Mammary epithelial cell (primary cell): ENCODE measurements at regions of chr15 and their contacts with region 1.

Region 1: DNA sequence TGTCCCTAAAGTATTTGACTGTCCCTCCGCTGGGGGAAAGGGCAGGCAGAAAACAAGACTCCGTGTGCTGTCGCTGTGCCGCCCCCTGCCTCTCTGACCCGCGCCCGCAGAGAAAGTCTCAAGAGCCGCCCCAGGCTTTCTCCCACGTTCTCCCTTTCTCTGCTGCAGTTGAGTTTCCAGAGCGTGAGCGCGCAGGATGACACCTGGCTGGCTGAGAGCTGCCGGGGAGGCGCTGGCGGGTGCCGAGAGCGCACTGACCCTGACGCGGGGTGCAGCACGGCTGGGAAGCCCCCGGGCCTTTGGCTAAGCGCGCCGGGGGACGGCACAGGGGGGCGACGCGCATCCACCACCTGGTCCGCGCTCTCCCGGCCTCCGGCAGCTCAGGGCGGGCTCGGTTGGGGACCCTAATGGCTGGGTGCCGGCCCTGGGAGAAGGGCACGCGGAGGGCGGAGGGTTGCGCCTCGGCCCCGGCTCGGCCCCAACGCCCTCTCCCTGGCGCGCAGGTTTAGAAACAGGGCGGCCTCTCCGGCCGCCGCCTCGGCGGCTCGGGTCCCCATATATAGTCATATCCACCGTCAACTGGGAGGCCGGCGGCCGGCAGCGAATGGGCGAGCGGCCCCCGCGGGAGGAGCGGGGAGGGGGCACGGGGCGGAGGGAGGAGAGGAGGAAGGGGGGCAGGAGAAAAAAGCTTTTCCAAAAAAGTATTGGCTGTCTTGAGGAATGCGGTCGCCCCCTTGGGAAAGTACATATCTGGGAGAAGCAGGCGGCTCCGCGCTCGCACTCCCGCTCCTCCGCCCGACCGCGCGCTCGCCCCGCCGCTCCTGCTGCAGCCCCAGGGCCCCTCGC is at the start of gene TPM1:
- DNase-seq: peak; percentile 92
- H3K4me3 ChIP-seq: peak within 1 kb of the TSS; percentile 70 to 88 (median 83)
- H3K27ac ChIP-seq: peak within 1 kb of the TSS; percentile 81
- H3K4me1 ChIP-seq: peaks cover 74% of the 10 kb centered on the region
- H3K27me3 ChIP-seq: no peaks in the 10 kb centered on the region
- CTCF ChIP-seq: no peak
- total RNA-seq, gene TPM1: 463 to 1,538 TPM

Region 2: DNA sequence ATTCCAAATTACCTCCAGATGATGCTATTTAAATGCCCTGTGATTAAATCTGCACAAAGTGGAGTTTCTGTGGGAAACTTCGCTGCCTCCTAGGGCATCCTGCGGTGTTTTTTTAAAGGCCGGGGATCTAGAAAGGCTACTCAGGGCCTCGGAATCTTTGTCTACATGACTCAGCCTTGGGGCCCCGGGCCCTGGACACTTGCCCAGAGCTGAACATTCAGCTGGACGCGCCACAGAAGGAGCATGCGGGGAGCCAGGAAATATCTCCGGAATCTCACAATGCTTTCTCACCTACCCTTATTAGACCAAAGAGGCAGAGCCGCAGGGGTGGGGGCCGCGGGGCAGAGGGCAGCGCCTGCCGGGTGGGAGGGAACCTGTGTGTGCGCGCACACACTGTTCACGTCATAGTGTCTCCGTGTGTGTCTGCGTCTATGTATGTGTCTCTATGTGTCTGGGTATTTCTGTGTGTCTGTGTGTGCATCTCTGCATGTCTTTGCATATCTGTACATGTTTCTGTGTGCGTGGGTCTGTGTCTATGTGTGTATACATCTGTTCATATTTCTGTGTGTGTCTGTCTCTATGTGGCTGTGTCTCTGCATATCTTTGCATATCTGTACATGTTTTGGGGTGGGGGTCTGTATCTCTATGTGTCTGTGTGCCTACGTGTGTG is 145.1 kb before region 1 on chr15:
- CTCF ChIA-PET with region 1: interaction called, 3 read pairs
- dilution Hi-C with region 1: loop called (anchors 5 kb)
- in situ Hi-C with region 1: no loop called
- intact Hi-C with region 1: loop called (anchors 1 kb)
- DNase-seq: peak; percentile 98
- H3K4me3 ChIP-seq: peak overlapping the region in 1 of 3 experiments; percentile 25
- H3K27ac ChIP-seq: peak overlapping the region; percentile 100
- H3K4me1 ChIP-seq: peaks cover 79% of the 10 kb centered on the region
- H3K27me3 ChIP-seq: no peaks in the 10 kb centered on the region
- CTCF ChIP-seq: no peak

Region 3: GRCh38 chr15:62940755-62941361 is 101.3 kb before region 1 on chr15:
- CTCF ChIA-PET with region 1: no interaction called
- dilution Hi-C with region 1: no loop called
- in situ Hi-C with region 1: no loop called
- intact Hi-C with region 1: loop called (anchors 5 kb)
- DNase-seq: peak; percentile 95
- H3K4me3 ChIP-seq: no peak overlapping the region
- H3K27ac ChIP-seq: peak overlapping the region; percentile 48
- H3K4me1 ChIP-seq: peaks cover 21% of the 10 kb centered on the region
- H3K27me3 ChIP-seq: no peaks in the 10 kb centered on the region
- CTCF ChIP-seq: no peak

Region 4: GRCh38 chr15:63006032-63006878 is 35.9 kb before region 1 on chr15:
- CTCF ChIA-PET with region 1: interaction called, 7 read pairs
- dilution Hi-C with region 1: no loop called
- in situ Hi-C with region 1: no loop called
- intact Hi-C with region 1: loop called (anchors 1 kb)
- DNase-seq: peak; percentile 31
- H3K4me3 ChIP-seq: no peak overlapping the region
- H3K27ac ChIP-seq: no peak overlapping the region
- H3K4me1 ChIP-seq: peaks cover 14% of the 10 kb centered on the region
- H3K27me3 ChIP-seq: no peaks in the 10 kb centered on the region
- CTCF ChIP-seq: no peak

Region 5: GRCh38 chr15:63079938-63080626 is 37.9 kb after region 1 on chr15:
- CTCF ChIA-PET with region 1: no interaction called
- dilution Hi-C with region 1: no loop called
- in situ Hi-C with region 1: no loop called
- intact Hi-C with region 1: no loop called
- DNase-seq: peak; percentile 53
- H3K4me3 ChIP-seq: no peak overlapping the region
- H3K27ac ChIP-seq: no peak overlapping the region
- H3K4me1 ChIP-seq: peaks cover 12% of the 10 kb centered on the region
- H3K27me3 ChIP-seq: no peaks in the 10 kb centered on the region
- CTCF ChIP-seq: no peak

Region 6: GRCh38 chr15:63112871-63113270 is 70.7 kb after region 1 on chr15:
- CTCF ChIA-PET with region 1: interaction called, 11 read pairs
- dilution Hi-C with region 1: no loop called
- in situ Hi-C with region 1: no loop called
- intact Hi-C with region 1: no loop called
- DNase-seq: no peak
- H3K4me3 ChIP-seq: no peak overlapping the region
- H3K27ac ChIP-seq: no peak overlapping the region
- H3K4me1 ChIP-seq: peaks cover 4% of the 10 kb centered on the region
- H3K27me3 ChIP-seq: no peaks in the 10 kb centered on the region
- CTCF ChIP-seq: no peak

Region 7: DNA sequence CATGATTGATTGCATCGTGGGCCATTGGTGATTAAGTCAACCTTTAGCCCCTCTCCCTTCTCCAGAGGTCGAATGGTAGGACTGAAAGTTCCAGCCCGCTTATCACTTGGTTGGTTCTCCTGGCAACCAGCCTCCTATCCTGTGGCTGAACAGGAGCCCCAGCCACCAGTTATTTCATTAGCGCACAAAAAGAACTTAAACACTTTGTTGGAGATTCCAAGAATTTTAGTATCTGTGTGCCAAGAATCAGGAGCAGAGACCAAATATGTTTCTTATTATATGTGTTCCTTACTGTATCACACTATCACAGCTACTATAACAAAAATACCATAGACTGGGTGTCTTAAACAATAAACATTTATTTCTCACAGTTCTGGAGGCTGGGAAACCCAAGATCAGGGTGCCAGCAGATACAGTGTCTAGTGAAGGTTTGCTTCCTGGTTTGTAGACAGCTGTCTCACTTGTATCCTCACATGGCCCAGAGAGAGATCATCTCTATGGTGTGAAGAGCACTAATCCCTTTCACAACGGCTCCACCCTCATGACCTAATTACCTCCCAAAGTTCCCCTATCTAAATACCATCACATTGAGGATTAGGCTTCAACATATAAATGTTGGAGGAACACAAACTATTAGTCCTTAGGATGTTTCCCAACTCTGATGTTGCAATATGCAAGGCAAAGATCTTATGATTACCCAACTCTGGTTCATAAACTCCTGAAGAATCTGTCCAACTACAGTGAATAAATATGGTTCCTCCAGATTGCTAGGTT is 204.7 kb after region 1 on chr15:
- CTCF ChIA-PET with region 1: no interaction called
- dilution Hi-C with region 1: no loop called
- in situ Hi-C with region 1: no loop called
- intact Hi-C with region 1: no loop called
- DNase-seq: peak; percentile 83
- H3K4me3 ChIP-seq: no peak overlapping the region
- H3K27ac ChIP-seq: peak overlapping the region; percentile 2
- H3K4me1 ChIP-seq: peaks cover 51% of the 10 kb centered on the region
- H3K27me3 ChIP-seq: no peaks in the 10 kb centered on the region
- CTCF ChIP-seq: no peak